ENCODE measurements at regions of chr10 and their contacts with region 1.

Region 1: GRCh38 chr10:66192162-66192831 is 733.5 kb upstream of the LRRTM3 start:
- DNase-seq: no peak
- ATAC-seq: no peak

Region 2: DNA sequence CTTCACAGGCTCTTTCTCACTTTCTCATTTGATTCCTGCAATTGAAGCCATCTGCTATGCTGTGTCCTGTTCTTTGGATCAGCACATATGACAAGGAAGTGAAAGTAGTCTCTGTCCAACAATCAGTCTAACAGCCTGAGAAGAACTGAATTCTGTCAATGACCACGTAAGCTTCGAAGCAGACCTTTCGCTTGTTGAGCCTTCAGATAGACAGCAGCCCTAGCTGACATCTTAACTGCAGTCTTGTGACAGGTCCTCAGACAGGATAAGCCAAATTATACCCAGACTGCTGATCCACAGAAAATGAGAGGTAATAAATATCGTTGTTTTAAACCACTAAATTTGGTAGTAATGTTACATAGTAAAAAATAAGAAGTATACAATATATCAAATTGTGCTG is 42.6 kb after region 1 on chr10:
- intact Hi-C with region 1: loop called (anchors 5 kb)
- DNase-seq: no peak
- ATAC-seq: no peak

Measured in sciatic nerve (tissue), 2 donors.